ENCODE measurements at regions of chr7 and their contacts with region 1.

Region 1: DNA sequence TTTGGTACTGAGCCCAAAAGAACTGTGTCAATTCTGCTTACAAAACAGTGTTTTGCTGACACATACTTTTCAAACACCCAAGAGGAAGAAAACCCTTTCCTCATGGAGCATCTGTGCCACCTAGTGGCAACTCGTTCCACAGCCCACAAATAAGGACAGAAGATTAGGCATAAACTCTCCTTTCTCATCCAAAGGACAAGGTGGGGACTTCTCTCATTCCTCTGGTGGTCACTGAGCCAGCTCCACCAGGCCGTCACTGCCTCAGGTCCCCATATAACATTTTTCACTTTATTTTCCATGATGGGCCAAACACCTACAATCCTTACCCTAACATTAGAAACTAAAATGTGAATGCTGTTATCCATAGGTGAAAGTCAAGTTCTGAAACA is 76.9 kb downstream of the RNF216 start:
- DNase-seq: peak; percentile 58 to 92 (median 82)
- H3K4me3 ChIP-seq: peak overlapping the region in 30 of 59 donors; percentile 2 to 44 (median 24)
- H3K27ac ChIP-seq: peak overlapping the region; percentile 33 to 98 (median 92)
- H3K27me3 ChIP-seq: no peaks in the 10 kb centered on the region
- CTCF ChIP-seq: peak; percentile 88 to 99 (median 97)

Region 2: GRCh38 chr7:5363729-5364128 is 340.8 kb before region 1 on chr7:
- intact Hi-C with region 1: loop called in 1 of 2 experiments (anchors 10 kb)
- DNase-seq: no peak
- H3K4me3 ChIP-seq: no peak overlapping the region
- H3K27ac ChIP-seq: peak overlapping the region in 41 of 59 donors; percentile 7 to 83 (median 49)
- H3K27me3 ChIP-seq: no peaks in the 10 kb centered on the region
- CTCF ChIP-seq: no peak

Region 3: GRCh38 chr7:5423844-5424688 is 280.5 kb before region 1 on chr7:
- intact Hi-C with region 1: loop called in 1 of 2 experiments (anchors 2 kb)
- DNase-seq: peak; percentile 87 to 97 (median 94)
- H3K4me3 ChIP-seq: peak overlapping the region; percentile 69 to 99 (median 91)
- H3K27ac ChIP-seq: peak overlapping the region; percentile 95 to 100 (median 100)
- H3K27me3 ChIP-seq: no peaks in the 10 kb centered on the region
- CTCF ChIP-seq: peak in 2 of 56 donors; percentile 16 to 20

Region 4: GRCh38 chr7:5494683-5495561 is 209.6 kb before region 1 on chr7:
- intact Hi-C with region 1: loop called (anchors 1 to 2 kb)
- DNase-seq: peak; percentile 77 to 88 (median 82)
- H3K4me3 ChIP-seq: peak overlapping the region; percentile 23 to 67 (median 52)
- H3K27ac ChIP-seq: peak overlapping the region; percentile 69 to 99 (median 96)
- H3K27me3 ChIP-seq: no peaks in the 10 kb centered on the region
- CTCF ChIP-seq: peak; percentile 82 to 99 (median 96)

Region 5: DNA sequence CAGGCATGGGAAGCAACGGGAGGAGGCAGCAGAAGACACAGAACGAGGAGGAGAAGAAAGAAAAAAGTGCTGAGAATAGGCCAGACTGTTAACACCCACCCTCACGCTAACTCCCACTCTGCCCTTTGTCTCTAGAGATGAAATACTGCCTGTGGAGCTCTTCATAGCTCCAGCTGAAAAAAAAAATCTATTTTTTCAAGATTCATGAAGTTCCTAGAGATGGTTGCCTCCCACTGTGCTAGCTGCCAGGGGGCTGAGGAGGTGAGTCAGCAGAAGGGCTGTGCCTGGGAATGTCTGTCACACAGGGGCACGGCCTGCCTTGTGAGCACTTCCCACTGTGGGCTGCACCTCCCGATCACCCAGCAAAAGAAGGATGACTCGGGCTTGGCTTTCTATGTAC is 67.6 kb before region 1 on chr7:
- intact Hi-C with region 1: loop called in 1 of 2 experiments (anchors 5 kb)
- DNase-seq: peak in 8 of 10 donors; percentile 43 to 87 (median 70)
- H3K4me3 ChIP-seq: peak overlapping the region in 40 of 59 donors; percentile 0 to 46 (median 24)
- H3K27ac ChIP-seq: peak overlapping the region; percentile 71 to 98 (median 91)
- H3K27me3 ChIP-seq: no peaks in the 10 kb centered on the region
- CTCF ChIP-seq: peak in 1 of 56 donors; percentile 24

Region 6: GRCh38 chr7:5665094-5666025 is 39.2 kb before region 1 on chr7:
- intact Hi-C with region 1: loop called in 1 of 2 experiments (anchors 5 kb)
- DNase-seq: peak; percentile 41 to 89 (median 74)
- H3K4me3 ChIP-seq: peak overlapping the region in 1 of 59 donors; percentile 6
- H3K27ac ChIP-seq: peak overlapping the region in 40 of 59 donors; percentile 2 to 86 (median 50)
- H3K27me3 ChIP-seq: no peaks in the 10 kb centered on the region
- CTCF ChIP-seq: peak; percentile 84 to 97 (median 92)

Region 7: GRCh38 chr7:5677538-5678294 is 26.8 kb before region 1 on chr7:
- intact Hi-C with region 1: loop called in 1 of 2 experiments (anchors 2 kb)
- DNase-seq: peak; percentile 57 to 79 (median 72)
- H3K4me3 ChIP-seq: no peak overlapping the region
- H3K27ac ChIP-seq: peak overlapping the region in 41 of 59 donors; percentile 3 to 77 (median 39)
- H3K27me3 ChIP-seq: no peaks in the 10 kb centered on the region
- CTCF ChIP-seq: peak; percentile 42 to 87 (median 78)

Region 8: GRCh38 chr7:6495597-6496262 is 791.2 kb after region 1 on chr7:
- intact Hi-C with region 1: no loop called
- DNase-seq: no peak
- H3K4me3 ChIP-seq: no peak overlapping the region
- H3K27ac ChIP-seq: no peak overlapping the region
- H3K27me3 ChIP-seq: no peaks in the 10 kb centered on the region
- CTCF ChIP-seq: no peak